ENCODE measurements at regions of chr1 and their contacts with region 1.

Region 1: DNA sequence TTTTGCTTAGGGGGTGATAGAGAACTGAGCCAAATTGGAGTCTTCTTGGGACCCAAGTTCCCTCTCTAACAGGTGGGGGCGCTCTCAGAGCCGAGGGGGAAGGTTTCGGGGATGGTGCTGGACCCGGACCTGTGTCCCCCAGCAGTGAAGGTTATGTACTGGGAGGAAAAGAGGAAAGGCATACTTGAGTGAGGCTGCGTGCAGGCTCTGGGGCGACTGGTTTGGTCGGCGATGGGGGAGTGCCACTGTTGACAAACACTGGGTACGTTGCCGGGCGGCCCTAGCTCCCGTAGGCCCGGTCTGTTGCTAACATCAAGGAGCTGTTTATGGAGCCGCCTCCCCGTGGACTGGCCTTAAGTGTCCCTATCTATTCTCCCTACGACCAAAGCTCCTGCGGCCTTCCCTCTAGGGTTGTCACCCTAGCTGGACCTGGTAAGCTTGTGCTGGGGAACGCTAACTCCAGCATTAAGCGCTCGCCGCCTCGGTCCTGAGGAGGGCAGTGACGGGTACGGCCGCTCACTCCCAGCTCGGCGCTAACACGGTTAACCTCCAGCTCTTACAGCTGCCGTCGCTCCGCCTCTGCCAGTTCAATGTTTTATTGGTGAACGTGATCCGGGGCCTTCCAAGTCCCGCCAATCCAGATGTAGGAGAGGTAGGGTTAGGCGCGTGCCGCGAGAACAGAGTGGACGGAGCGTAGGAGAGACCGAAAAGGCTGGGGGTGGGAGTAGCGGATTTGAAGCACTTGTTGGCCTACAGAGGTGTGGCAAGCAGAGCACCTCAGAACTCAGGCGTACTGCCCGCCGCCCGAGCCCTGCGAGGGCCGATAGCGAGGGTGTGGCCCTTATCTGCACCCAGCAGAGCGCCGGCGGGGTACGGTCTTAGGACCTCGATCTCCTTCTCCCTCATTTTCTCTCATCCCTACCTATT is at the start of gene PPOX:
- DNase-seq: peak; percentile 98
- H3K4me3 ChIP-seq: peak within 1 kb of the TSS; percentile 60 to 66 (median 65)
- H3K27ac ChIP-seq: peak within 1 kb of the TSS; percentile 86
- H3K4me1 ChIP-seq: peaks cover 18% of the 10 kb centered on the region
- H3K27me3 ChIP-seq: no peaks in the 10 kb centered on the region
- CTCF ChIP-seq: peak; percentile 27 to 48
- total RNA-seq, gene PPOX: 13.0 to 15.6 TPM

Region 2: DNA sequence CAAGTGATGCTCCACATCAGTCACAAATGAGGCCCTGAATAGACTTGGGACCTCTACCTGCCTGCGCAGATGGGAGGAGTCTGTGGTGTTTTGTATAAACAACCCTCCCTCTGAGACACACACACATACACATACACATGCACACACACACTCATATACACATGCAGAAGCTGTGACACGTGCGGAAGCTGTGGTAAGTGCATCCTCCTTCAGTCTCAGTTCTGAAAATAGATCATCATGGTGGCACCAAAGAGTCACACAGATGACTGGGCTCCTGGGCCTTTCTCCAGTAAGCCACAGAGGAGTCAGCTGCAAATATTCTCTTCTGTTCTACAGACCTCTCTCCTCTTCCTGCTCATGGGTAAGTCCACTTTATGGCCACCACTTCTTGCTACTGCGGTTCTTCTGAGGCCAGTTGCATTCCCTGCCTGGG is 370.0 kb before region 1 on chr1 and contains the start of gene LY9:
- CTCF ChIA-PET with region 1: no interaction called
- dilution Hi-C with region 1: no loop called
- in situ Hi-C with region 1: no loop called
- intact Hi-C with region 1: no loop called
- DNase-seq: no peak
- H3K4me3 ChIP-seq: no peak within 1 kb of the TSS
- H3K27ac ChIP-seq: no peak within 1 kb of the TSS
- H3K4me1 ChIP-seq: no peaks in the 10 kb centered on the region
- H3K27me3 ChIP-seq: no peaks in the 10 kb centered on the region
- CTCF ChIP-seq: no peak
- total RNA-seq, gene LY9: not detected

Region 3: GRCh38 chr1:161106431-161106830 is 59.6 kb before region 1 on chr1:
- CTCF ChIA-PET with region 1: no interaction called
- dilution Hi-C with region 1: no loop called
- in situ Hi-C with region 1: no loop called
- intact Hi-C with region 1: no loop called
- DNase-seq: no peak
- H3K4me3 ChIP-seq: no peak overlapping the region
- H3K27ac ChIP-seq: no peak overlapping the region
- H3K4me1 ChIP-seq: peaks cover 8% of the 10 kb centered on the region
- H3K27me3 ChIP-seq: no peaks in the 10 kb centered on the region
- CTCF ChIP-seq: no peak

Region 4: DNA sequence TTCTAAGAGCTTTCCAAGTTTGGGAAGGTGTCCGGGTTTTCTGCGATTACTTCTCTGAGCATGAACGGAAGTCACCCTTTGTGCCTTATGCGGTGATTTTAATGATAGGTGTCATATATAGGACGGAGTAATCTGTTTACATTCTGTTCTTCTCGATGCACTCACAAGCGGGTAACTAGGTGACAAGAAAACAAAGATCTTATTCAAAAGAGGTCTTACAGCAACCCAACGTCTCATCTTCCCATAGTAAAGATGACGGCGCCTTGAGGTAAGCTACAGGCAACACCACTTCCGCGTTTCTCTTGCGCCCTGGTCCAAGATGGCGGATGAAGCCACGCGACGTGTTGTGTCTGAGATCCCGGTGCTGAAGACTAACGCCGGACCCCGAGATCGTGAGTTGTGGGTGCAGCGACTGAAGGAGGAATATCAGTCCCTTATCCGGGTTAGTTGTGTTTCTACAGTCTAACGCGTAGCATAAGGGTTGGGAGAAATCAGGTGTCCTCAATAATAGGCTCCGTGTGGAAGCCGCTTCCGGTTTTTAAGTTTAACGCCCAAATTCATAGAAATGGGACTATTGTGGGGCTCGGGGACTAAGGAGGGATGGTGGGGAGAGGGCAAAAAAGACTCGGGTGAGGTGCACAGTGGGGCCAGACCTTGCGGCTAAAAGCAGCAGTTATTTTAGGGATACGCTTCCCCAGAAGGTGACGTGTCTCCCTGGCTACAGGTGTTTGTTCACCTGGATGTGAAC is 12.2 kb before region 1 on chr1 and contains the start of gene UFC1:
- CTCF ChIA-PET with region 1: no interaction called
- dilution Hi-C with region 1: no loop called
- in situ Hi-C with region 1: no loop called
- intact Hi-C with region 1: loop called (anchors 1 kb)
- DNase-seq: peak; percentile 90
- H3K4me3 ChIP-seq: peak within 1 kb of the TSS; percentile 74 to 80 (median 75)
- H3K27ac ChIP-seq: peak within 1 kb of the TSS; percentile 96
- H3K4me1 ChIP-seq: peaks cover 3% of the 10 kb centered on the region
- H3K27me3 ChIP-seq: no peaks in the 10 kb centered on the region
- CTCF ChIP-seq: peak in 1 of 2 donors; percentile 1
- total RNA-seq, gene UFC1: 49.2 to 59.3 TPM

Region 5: GRCh38 chr1:161177112-161177935 is 11.3 kb after region 1 on chr1 and contains the start of gene B4GALT3:
- CTCF ChIA-PET with region 1: no interaction called
- dilution Hi-C with region 1: no loop called
- in situ Hi-C with region 1: no loop called
- intact Hi-C with region 1: loop called (anchors 1 kb)
- DNase-seq: peak; percentile 76
- H3K4me3 ChIP-seq: peak within 1 kb of the TSS; percentile 76 to 97 (median 83)
- H3K27ac ChIP-seq: peak within 1 kb of the TSS; percentile 88
- H3K4me1 ChIP-seq: peaks cover 17% of the 10 kb centered on the region
- H3K27me3 ChIP-seq: no peaks in the 10 kb centered on the region
- CTCF ChIP-seq: peak in 1 of 2 donors; percentile 34
- total RNA-seq, gene B4GALT3: 25.8 to 32.1 TPM

Region 6: DNA sequence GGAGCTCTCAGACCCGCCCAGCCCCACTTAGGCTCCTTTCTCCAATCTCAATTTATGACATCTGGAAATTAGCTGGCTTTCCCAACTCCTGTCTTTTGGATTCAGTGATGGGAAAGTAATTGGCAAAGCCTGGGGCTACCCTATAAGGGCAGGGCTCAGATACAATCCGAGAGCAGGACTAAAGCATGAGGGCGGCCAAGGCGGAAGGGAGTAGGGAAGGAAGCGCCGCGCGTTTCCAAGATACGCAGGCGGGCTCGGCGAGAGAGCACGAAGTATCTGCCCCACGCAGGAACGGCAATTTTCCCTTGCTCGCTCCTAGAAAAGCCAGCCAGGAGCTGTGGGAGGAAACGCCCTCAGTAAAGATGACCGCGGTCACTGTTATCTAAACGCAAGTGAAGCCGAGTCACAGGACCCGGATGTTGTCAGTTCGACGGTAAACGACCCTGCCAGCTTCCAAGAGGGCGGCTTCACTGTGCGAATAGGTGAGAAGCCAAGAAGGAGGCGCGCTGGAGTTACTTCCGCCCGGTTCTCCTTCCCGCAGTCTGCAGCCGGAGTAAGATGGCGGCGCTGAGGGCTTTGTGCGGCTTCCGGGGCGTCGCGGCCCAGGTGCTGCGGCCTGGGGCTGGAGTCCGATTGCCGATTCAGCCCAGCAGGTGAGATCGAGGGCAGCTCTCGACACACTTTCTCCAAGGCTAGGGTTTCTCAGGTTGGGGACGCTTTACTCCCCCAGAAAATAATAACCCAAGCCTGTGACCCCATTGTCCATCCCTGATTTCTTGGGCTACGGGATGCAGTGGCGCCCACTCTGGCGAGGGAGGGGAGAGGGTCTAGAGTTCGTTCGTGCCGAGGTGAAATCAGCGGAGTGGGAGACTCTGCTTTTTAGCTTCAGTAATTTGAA is 36.1 kb after region 1 on chr1 and contains the start of gene NDUFS2:
- CTCF ChIA-PET with region 1: no interaction called
- dilution Hi-C with region 1: no loop called
- in situ Hi-C with region 1: no loop called
- intact Hi-C with region 1: loop called (anchors 1 kb)
- DNase-seq: peak; percentile 97
- H3K4me3 ChIP-seq: peak within 1 kb of the TSS; percentile 71 to 89 (median 81)
- H3K27ac ChIP-seq: peak within 1 kb of the TSS; percentile 74
- H3K4me1 ChIP-seq: peaks cover 42% of the 10 kb centered on the region
- H3K27me3 ChIP-seq: no peaks in the 10 kb centered on the region
- CTCF ChIP-seq: peak in 1 of 2 donors; percentile 20
- total RNA-seq, gene NDUFS2: 69.3 to 82.6 TPM

Measured in mammary epithelial cell (primary cell).